ENCODE measurements at regions of chr6 and their contacts with region 1.

Region 1: GRCh38 chr6:151765444-151765886 is 42.0 kb upstream of the ESR1 start:
- DNase-seq: peak; percentile 57
- ATAC-seq: peak; percentile 50
- H3K4me3 Mint-ChIP-seq: no peak overlapping the region
- H3K27ac Mint-ChIP-seq: no peak overlapping the region
- H3K4me1 Mint-ChIP-seq: peaks cover 15% of the 10 kb centered on the region
- H3K27me3 Mint-ChIP-seq: peaks cover 9% of the 10 kb centered on the region

Region 2: DNA sequence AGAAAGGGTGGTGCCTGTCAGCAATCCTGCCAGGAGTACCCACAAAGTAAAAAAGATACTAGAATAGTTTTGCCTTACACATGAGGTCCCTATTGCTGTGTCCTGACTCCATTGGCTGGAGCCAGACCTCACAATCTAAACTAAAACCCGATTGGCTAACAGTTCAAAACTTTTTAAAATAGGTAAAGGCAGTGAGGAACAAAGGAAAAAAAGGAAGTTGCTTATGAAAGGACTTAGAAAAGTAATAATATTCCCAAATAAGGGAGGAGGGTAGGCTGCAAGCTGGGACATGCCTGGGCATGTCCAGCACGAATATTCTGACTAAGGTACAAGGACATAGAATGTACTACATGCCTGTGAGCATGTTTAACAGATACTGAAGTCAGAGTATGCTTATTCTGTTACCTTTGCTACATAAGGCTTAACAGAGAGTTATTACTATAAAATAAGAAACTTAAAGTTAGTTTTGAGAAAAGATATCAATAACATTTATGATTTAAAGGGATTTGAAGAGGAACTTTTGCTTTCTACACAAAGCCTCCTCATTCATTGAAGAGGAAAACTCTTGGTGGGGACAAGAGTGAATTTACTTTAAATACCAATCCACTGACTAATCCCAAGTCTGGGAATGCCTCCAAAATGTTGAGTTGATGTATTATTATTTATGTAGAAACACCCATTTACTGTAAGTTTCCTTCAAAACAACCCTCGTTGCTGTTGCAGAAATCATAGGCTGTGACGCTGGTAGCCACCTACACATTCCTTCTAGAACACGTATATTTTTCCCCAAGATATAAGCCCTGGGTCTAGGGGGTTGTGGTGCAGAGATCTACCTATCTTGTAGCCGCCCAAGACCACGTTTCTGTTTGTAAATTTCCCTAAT is 908.2 kb before region 1 on chr6:
- CTCF ChIA-PET with region 1: no interaction called
- POLR2A ChIA-PET with region 1: no interaction called
- intact Hi-C with region 1: no loop called
- DNase-seq: peak; percentile 20
- ATAC-seq: peak; percentile 57
- H3K4me3 Mint-ChIP-seq: no peak overlapping the region
- H3K27ac Mint-ChIP-seq: peak overlapping the region; percentile 58
- H3K4me1 Mint-ChIP-seq: peaks cover 13% of the 10 kb centered on the region
- H3K27me3 Mint-ChIP-seq: peaks cover 7% of the 10 kb centered on the region

Region 3: GRCh38 chr6:151589667-151590066 is 175.8 kb before region 1 on chr6:
- CTCF ChIA-PET with region 1: no interaction called
- POLR2A ChIA-PET with region 1: no interaction called
- intact Hi-C with region 1: no loop called
- DNase-seq: no peak
- ATAC-seq: no peak
- H3K4me3 Mint-ChIP-seq: no peak overlapping the region
- H3K27ac Mint-ChIP-seq: no peak overlapping the region
- H3K4me1 Mint-ChIP-seq: no peaks in the 10 kb centered on the region
- H3K27me3 Mint-ChIP-seq: peaks cover 20% of the 10 kb centered on the region

Region 4: DNA sequence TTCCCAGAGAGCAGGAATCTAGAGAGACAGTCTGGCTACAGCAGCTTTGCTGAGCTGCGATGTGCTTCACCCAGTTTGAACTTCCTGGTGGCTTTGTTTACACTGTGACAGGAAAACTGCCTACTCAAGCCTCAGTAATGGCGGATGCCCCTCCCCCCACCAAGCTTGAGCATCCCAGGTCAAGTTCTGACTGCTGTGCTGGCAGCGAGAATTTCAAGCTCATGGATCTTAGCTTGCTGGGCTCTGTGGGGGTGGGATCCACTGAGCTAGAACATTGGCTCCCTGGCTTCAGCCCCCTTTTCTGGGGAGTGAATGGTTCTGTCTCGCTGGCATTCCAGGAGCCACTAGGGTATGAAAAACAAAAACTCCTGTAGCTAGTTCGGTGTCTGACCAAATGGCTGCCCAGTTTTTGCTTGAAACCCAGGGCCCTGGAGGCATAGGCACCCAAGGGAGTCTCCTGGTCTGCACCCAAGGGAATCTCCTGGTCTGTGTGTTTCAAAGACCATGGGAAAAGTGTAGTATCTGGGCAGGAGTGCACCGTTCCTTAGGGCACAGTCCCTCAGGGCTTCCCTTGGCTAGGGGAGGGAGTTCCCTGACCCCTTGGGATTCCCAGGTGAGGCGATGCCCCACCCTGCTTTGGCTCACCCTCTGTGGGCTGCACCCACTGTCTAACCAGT is 48.8 kb before region 1 on chr6:
- CTCF ChIA-PET with region 1: interaction called, 12 read pairs
- POLR2A ChIA-PET with region 1: no interaction called
- intact Hi-C with region 1: no loop called
- DNase-seq: peak; percentile 41
- ATAC-seq: no peak
- H3K4me3 Mint-ChIP-seq: no peak overlapping the region
- H3K27ac Mint-ChIP-seq: no peak overlapping the region
- H3K4me1 Mint-ChIP-seq: peaks cover 16% of the 10 kb centered on the region
- H3K27me3 Mint-ChIP-seq: peaks cover 4% of the 10 kb centered on the region

Region 5: GRCh38 chr6:151962246-151962846 is 196.9 kb after region 1 on chr6:
- CTCF ChIA-PET with region 1: no interaction called
- POLR2A ChIA-PET with region 1: no interaction called
- intact Hi-C with region 1: loop called in 1 of 2 experiments (anchors 5 kb)
- DNase-seq: peak; percentile 16
- ATAC-seq: peak; percentile 72
- H3K4me3 Mint-ChIP-seq: no peak overlapping the region
- H3K27ac Mint-ChIP-seq: no peak overlapping the region
- H3K4me1 Mint-ChIP-seq: peaks cover 18% of the 10 kb centered on the region
- H3K27me3 Mint-ChIP-seq: peaks cover 27% of the 10 kb centered on the region

Region 6: GRCh38 chr6:152124429-152125074 is 359.1 kb after region 1 on chr6:
- CTCF ChIA-PET with region 1: interaction called, 11 read pairs
- POLR2A ChIA-PET with region 1: no interaction called
- intact Hi-C with region 1: loop called (anchors 1 to 2 kb)
- DNase-seq: no peak
- ATAC-seq: peak; percentile 49
- H3K4me3 Mint-ChIP-seq: no peak overlapping the region
- H3K27ac Mint-ChIP-seq: no peak overlapping the region
- H3K4me1 Mint-ChIP-seq: no peaks in the 10 kb centered on the region
- H3K27me3 Mint-ChIP-seq: no peaks in the 10 kb centered on the region

Region 7: DNA sequence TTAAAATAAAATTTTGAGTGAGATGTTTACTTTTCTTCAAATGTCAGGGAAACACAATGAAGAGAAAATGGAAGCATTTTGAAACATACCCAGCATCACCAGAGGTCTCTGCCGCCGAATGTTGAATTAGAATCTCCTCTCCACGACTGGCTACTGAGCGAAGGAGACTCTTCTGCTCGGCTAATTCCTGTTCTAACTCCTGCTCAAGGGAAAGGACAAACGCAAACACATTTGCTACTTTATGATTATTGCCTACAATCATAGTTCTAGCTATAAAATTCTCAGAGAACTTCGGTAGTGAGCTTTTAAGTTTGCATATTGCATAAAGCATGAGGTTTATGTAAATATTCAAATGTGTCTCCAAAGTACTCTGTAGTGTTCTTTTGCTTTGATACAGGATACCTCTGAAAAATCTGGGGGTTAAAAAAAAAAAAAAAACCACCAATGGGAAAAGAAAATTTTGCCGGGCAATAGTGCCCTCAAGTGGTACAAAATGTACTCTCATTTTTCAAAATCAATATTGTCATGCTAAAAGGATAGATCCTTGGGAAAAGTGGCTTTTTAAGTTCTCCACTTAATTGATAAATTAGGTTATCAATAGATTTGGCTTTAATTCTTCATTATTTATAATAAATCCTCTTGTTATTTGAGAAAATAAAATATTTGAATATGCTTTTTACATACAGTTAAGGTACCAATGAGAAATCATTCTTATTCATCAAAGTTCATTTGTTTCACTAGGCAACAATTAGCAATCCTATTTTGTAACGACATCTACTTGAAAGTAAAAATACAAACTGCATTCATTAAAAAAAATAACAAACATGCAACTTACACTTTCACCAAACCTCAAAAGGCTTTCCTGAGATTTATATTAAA is 502.7 kb after region 1 on chr6:
- CTCF ChIA-PET with region 1: interaction called, 11 read pairs
- POLR2A ChIA-PET with region 1: no interaction called
- intact Hi-C with region 1: loop called (anchors 1 kb)
- DNase-seq: peak; percentile 42
- ATAC-seq: no peak
- H3K4me3 Mint-ChIP-seq: no peak overlapping the region
- H3K27ac Mint-ChIP-seq: no peak overlapping the region
- H3K4me1 Mint-ChIP-seq: peaks cover 11% of the 10 kb centered on the region
- H3K27me3 Mint-ChIP-seq: no peaks in the 10 kb centered on the region

Region 8: DNA sequence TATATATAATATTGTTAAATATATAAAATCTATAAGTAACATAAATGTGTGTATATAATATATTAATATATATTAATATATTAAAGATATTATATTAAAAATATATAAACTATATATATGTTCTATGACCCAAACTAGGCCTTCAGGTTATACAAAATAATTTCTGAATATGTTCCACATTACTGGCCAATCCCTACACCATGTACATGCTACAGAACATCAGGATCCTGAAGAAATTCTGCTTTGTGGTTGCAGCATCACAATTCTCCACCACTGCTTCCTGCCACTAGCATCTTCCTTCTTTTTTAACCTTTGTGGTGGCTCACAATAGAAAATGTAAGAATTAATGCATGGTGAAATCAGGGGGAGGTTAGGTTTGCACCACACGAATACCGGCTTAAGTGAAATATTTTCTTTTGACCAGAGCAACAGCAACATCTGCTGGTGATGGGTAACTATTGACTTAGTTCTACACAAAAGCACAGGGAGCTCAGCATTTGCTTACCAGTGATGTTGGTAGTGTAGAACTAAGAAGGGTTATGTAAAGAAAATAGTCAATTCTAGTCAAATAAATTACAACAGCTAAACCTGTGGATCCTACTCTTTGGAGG is 591.1 kb after region 1 on chr6:
- CTCF ChIA-PET with region 1: no interaction called
- POLR2A ChIA-PET with region 1: interaction called, 3 read pairs
- intact Hi-C with region 1: loop called in 1 of 2 experiments (anchors 5 kb)
- DNase-seq: no peak
- ATAC-seq: peak; percentile 69
- H3K4me3 Mint-ChIP-seq: no peak overlapping the region
- H3K27ac Mint-ChIP-seq: no peak overlapping the region
- H3K4me1 Mint-ChIP-seq: peaks cover 2% of the 10 kb centered on the region
- H3K27me3 Mint-ChIP-seq: no peaks in the 10 kb centered on the region

Region 9: DNA sequence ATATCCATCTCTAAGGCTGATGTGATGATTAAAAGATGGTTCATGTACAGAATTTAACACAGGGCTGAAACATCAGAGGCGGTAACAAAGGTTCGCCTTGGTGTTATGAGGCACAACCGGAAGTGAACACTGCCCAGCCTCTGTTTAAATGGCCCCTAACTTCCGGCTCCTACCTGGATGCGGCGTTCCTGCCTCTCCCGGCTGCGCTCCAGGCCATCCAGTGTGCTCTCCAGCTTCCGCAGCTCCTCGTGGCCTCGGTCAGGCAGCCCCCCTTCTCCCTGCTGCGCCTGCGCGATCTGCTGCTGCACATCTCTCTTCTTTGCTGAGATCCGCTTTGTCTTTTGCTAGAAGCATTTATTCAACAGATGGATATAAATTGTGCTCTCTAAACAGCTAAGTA is 676.4 kb after region 1 on chr6:
- CTCF ChIA-PET with region 1: no interaction called
- POLR2A ChIA-PET with region 1: no interaction called
- intact Hi-C with region 1: no loop called
- DNase-seq: no peak
- ATAC-seq: no peak
- H3K4me3 Mint-ChIP-seq: no peak overlapping the region
- H3K27ac Mint-ChIP-seq: no peak overlapping the region
- H3K4me1 Mint-ChIP-seq: no peaks in the 10 kb centered on the region
- H3K27me3 Mint-ChIP-seq: peaks cover 4% of the 10 kb centered on the region

Measured in activated CD4-positive, alpha-beta T cell treated with anti-CD3 and anti-CD28 coated beads for 36 hours (primary cell).